IMR-90 (cell line): ENCODE measurements at regions of chr17 and their contacts with region 1.

Region 1: DNA sequence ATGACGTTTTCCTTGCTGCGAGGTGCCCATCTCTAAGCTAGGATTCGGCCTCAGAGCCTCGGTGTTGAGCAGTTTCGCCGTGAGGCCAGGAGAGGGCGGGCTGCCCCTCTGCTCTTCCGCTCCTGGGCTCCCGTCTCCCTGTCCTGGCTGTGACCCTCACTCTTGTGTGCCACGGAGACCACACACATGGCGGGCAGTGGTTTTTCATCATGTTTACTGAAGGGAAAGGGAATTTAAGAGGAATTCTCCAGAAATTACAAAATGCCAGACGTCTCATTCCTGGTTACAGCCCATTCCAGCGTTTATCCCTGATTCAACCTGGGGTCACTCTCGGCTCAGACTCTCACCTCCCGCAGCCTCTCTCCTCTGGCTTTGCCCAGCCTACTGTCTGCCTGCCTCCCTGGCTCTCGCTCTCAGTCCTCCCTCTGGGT is 96.8 kb upstream of the ELAC2 start:
- DNase-seq: peak; percentile 28
- ATAC-seq: peak; percentile 100
- H3K4me3 ChIP-seq: no peak overlapping the region; the same call in 1 of the 2 replicates
- H3K27ac ChIP-seq: no peak overlapping the region
- H3K4me1 ChIP-seq: no peaks in the 10 kb centered on the region
- H3K27me3 ChIP-seq: peaks cover 17% of the 10 kb centered on the region
- CTCF ChIP-seq: peak; percentile 71
- POLR2A ChIP-seq: no peak
- RAD21 ChIP-seq: peak; percentile 75

Region 2: DNA sequence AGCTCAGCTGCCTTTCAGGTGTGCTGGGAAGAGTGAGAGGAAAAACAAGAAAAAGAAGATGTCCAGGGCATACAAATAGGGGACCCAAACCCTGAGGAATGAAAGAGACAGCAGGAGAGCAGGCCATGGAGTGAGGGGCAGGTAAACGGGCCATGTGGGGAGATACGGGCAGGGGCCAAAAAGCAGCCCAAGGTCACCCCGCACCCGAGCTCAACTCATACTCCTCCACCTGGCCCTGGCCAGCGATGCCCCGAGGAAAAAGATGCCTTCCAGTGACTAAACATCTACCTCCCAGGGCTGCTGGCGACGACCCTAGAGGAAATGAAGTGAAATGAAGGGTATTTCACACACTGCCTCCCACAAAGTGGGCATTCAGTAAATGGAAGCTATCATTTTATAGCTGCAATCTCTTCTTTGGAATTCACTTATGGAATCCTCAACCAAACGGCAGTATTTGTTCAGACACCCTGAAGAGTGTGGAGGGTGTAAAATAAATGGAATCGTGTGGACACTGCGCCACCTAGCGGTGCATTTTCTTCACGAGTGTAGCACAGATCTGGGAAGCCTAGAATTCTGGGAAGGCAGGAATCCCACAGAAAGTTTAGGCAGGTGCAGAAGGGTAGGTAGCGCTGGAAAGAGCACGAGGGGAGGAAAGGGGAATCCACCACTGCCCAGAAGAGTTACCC is 111.7 kb before region 1 on chr17:
- CTCF ChIA-PET with region 1: no interaction called
- POLR2A ChIA-PET with region 1: no interaction called
- dilution Hi-C with region 1: no loop called
- in situ Hi-C with region 1: no loop called
- intact Hi-C with region 1: no loop called
- DNase-seq: peak; percentile 77
- ATAC-seq: peak; percentile 95
- H3K4me3 ChIP-seq: no peak overlapping the region
- H3K27ac ChIP-seq: no peak overlapping the region
- H3K4me1 ChIP-seq: no peaks in the 10 kb centered on the region
- H3K27me3 ChIP-seq: no peaks in the 10 kb centered on the region
- CTCF ChIP-seq: peak; percentile 83
- POLR2A ChIP-seq: no peak
- RAD21 ChIP-seq: peak; percentile 88

Region 3: DNA sequence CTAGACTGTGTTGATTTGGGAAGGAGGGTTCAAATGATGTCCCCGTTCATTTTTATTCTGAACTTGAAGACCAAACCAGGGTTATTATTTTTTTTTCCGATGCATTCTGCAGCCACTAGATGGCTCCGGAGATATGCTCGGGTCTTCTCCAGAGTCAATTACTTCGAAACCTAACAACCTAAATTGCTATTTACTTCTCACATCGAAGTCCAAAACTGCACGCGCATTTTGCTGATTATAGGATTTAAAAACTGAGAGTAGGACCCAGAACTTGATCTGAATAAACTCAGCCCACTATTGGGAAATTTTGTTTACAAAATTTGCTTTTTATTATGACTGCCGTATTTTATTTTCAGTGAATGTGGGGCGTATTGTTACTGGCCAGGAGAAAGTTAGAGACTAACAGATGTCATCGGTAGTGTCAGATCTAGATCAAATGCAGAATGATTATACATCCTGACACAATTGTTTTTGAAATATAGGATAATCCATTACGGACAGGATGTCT is 223.3 kb after region 1 on chr17:
- CTCF ChIA-PET with region 1: no interaction called
- POLR2A ChIA-PET with region 1: no interaction called
- dilution Hi-C with region 1: no loop called
- in situ Hi-C with region 1: no loop called
- intact Hi-C with region 1: loop called (anchors 5 kb)
- DNase-seq: peak; percentile 78
- ATAC-seq: peak; percentile 84
- H3K4me3 ChIP-seq: peak overlapping the region; percentile 54
- H3K27ac ChIP-seq: no peak overlapping the region
- H3K4me1 ChIP-seq: peaks cover 5% of the 10 kb centered on the region
- H3K27me3 ChIP-seq: no peaks in the 10 kb centered on the region
- CTCF ChIP-seq: peak; percentile 92
- POLR2A ChIP-seq: peak; percentile 45; the same call in 1 of the 2 replicates
- RAD21 ChIP-seq: peak; percentile 93